K562 (cell line): ENCODE measurements at regions of chr20 and their contacts with region 1.

Region 1: DNA sequence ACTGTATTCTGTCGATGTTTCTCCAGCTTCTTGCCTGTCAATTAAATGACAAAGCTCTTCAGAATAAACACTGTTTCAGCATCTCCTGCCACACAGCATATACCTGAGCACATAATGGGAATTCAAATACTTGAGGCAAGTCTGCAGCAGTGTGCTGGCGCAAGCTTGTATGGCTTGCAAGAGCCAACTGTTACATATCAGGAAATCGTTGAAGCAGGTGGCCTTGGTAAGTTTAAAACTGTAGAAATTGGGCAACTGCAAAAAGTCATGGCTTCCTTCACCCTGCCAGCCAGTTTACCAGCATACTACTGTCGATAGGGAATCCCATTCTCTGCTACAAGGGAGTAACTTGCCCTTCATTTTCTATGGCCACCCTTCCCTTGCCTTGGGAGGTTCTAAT is 23.0 kb downstream of the CPNE1 start:
- DNase-seq: no peak
- ATAC-seq: no peak
- H3K4me3 ChIP-seq: no peak overlapping the region
- H3K27ac ChIP-seq: no peak overlapping the region
- H3K4me1 ChIP-seq: peaks cover 0 to 2% of the 10 kb centered on the region in 2 experiments; a peak in 1 of 5 replicates
- H3K27me3 ChIP-seq: no peaks in the 10 kb centered on the region
- CTCF ChIP-seq: no peak
- EP300 ChIP-seq: no peak
- POLR2A ChIP-seq: no peak
- RAD21 ChIP-seq: no peak

Region 2: GRCh38 chr20:35515949-35516645 is 125.6 kb before region 1 on chr20:
- CTCF ChIA-PET with region 1: no interaction called
- POLR2A ChIA-PET with region 1: no interaction called
- in situ Hi-C with region 1: no loop called
- intact Hi-C with region 1: no loop called
- DNase-seq: peak in 2 of 4 experiments; percentile 22
- ATAC-seq: peak; percentile 18; the same call in 1 of the 3 replicates
- H3K4me3 ChIP-seq: no peak overlapping the region
- H3K27ac ChIP-seq: no peak overlapping the region
- H3K4me1 ChIP-seq: peaks cover 11 to 18% of the 10 kb centered on the region in 2 experiments; a peak in 4 of 5 replicates
- H3K27me3 ChIP-seq: no peaks in the 10 kb centered on the region
- CTCF ChIP-seq: no peak
- EP300 ChIP-seq: no peak
- POLR2A ChIP-seq: no peak
- RAD21 ChIP-seq: no peak

Region 3: GRCh38 chr20:35629427-35630145 is 12.2 kb before region 1 on chr20:
- CTCF ChIA-PET with region 1: no interaction called
- POLR2A ChIA-PET with region 1: interaction called, 11 read pairs
- in situ Hi-C with region 1: no loop called
- intact Hi-C with region 1: no loop called
- DNase-seq: no peak
- ATAC-seq: no peak
- H3K4me3 ChIP-seq: no peak overlapping the region
- H3K27ac ChIP-seq: no peak overlapping the region
- H3K4me1 ChIP-seq: no peaks in the 10 kb centered on the region; a peak in 1 of 5 replicates
- H3K27me3 ChIP-seq: no peaks in the 10 kb centered on the region
- CTCF ChIP-seq: no peak
- EP300 ChIP-seq: no peak
- POLR2A ChIP-seq: no peak
- RAD21 ChIP-seq: no peak

Region 4: DNA sequence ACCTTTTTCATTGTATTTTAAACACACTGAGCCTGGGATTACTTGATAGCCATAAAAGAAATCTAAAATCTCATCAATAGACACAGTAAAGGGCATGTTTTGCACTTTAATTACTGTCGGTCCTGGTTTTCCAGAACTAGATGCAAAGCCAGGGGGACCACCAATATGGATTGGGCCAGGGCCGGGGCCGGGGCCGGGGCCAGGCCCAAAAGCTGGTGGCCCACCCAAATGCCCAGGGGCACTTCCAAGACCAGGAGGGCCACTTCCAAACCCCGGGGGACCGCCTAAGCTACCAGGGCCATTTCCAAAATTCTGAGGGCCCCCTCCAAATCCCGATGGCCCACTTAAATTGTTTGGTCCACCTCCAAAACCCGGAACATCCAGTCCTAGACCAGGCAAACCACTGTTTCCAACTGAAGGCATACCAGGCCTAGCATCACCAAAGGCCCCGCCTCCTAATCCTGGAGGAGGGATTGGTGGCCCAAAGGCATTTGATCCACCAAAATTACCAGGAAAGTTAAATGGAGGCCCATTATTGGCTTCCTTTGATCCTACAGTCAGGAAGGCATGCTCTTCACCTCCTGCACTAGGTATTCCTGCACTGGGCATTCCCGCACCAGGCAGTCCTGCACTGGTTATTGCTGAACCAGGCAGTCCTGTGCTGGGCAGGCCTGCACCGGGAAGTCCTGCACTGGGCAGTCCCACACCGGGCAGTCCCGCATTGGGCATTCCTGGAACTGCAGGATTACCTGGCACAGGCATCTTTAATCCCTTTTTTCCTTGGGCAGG is 11.1 kb after region 1 on chr20:
- CTCF ChIA-PET with region 1: no interaction called
- POLR2A ChIA-PET with region 1: interaction called, 11 read pairs
- in situ Hi-C with region 1: no loop called
- intact Hi-C with region 1: no loop called
- DNase-seq: no peak
- ATAC-seq: peak; percentile 54
- H3K4me3 ChIP-seq: no peak overlapping the region
- H3K27ac ChIP-seq: no peak overlapping the region
- H3K4me1 ChIP-seq: no peaks in the 10 kb centered on the region; a peak in 1 of 5 replicates
- H3K27me3 ChIP-seq: no peaks in the 10 kb centered on the region
- CTCF ChIP-seq: no peak
- EP300 ChIP-seq: no peak
- POLR2A ChIP-seq: peak; percentile 32; the same call in 1 of the 2 replicates
- RAD21 ChIP-seq: no peak

Region 5: DNA sequence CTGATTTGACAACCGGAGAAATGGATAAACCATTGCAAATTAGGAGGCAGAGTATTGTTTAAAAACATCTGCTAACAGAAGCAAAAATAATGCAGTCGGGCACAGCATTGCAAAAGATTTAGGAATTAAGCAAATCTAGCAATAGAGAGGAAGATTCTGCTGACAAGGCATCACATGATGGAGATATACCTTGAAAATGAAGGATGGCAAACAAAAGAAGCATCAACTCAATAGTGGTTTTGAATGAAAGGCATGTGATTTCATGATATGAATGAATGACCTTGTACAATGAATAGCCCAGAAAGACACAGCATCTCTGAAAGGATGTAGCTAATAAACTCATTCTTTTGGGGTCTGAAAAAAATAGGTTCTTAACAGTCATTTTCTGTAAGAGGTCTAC is 108.9 kb after region 1 on chr20:
- CTCF ChIA-PET with region 1: no interaction called
- POLR2A ChIA-PET with region 1: no interaction called
- in situ Hi-C with region 1: no loop called
- intact Hi-C with region 1: no loop called
- DNase-seq: no peak
- ATAC-seq: no peak
- H3K4me3 ChIP-seq: no peak overlapping the region
- H3K27ac ChIP-seq: no peak overlapping the region
- H3K4me1 ChIP-seq: no peaks in the 10 kb centered on the region; a peak in 1 of 5 replicates
- H3K27me3 ChIP-seq: peaks cover 0 to 5% of the 10 kb centered on the region in 2 experiments; a peak in 1 of 5 replicates
- CTCF ChIP-seq: no peak
- EP300 ChIP-seq: no peak
- POLR2A ChIP-seq: no peak
- RAD21 ChIP-seq: no peak